ENCODE measurements at regions of chr10 and their contacts with region 1.

Region 1: GRCh38 chr10:24349379-24350001 is 140.6 kb downstream of the KIAA1217 start:
- DNase-seq: no peak
- H3K4me3 ChIP-seq: no peak overlapping the region
- H3K27ac ChIP-seq: no peak overlapping the region
- H3K4me1 ChIP-seq: peaks cover 17 to 33% of the 10 kb centered on the region in 2 donors
- H3K27me3 ChIP-seq: no peaks in the 10 kb centered on the region
- CTCF ChIP-seq: no peak
- POLR2A ChIP-seq: no peak

Region 2: GRCh38 chr10:24209946-24210491 is 139.5 kb before region 1 on chr10:
- intact Hi-C with region 1: loop called in 1 of 2 experiments (anchors 10 kb)
- DNase-seq: peak in 6 of 7 donors; percentile 18 to 53 (median 26)
- H3K4me3 ChIP-seq: peak overlapping the region in 2 of 4 donors; percentile 54 to 55
- H3K27ac ChIP-seq: peak overlapping the region in 4 of 5 donors; percentile 92 to 96 (median 94)
- H3K4me1 ChIP-seq: peaks cover 16 to 35% of the 10 kb centered on the region in 2 donors
- H3K27me3 ChIP-seq: no peaks in the 10 kb centered on the region
- CTCF ChIP-seq: no peak
- POLR2A ChIP-seq: no peak

Region 3: DNA sequence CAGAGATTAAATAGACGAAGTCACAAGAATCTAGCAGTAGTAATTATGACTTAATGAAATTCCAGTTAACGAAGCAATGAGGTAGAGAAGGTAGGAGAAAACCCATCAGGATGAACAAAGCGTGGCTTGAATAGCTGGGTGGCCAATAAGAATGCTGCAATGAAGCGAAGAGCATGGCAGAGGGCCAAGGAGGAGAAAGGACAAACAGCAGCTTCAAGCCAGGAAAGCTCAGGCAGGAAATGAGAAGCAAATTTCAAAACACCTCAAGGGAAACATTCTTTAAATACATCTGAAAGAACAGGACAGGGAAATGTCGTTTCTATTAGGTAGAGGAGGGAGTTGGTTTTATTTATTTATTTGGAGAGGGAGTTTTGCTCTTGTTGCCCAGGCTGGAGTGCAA is 18.0 kb before region 1 on chr10:
- intact Hi-C with region 1: no loop called
- DNase-seq: peak; percentile 39 to 83 (median 67)
- H3K4me3 ChIP-seq: no peak overlapping the region
- H3K27ac ChIP-seq: peak overlapping the region in 3 of 5 donors; percentile 18 to 79 (median 20)
- H3K4me1 ChIP-seq: peaks cover 9% of the 10 kb centered on the region in 2 donors
- H3K27me3 ChIP-seq: no peaks in the 10 kb centered on the region
- CTCF ChIP-seq: no peak
- POLR2A ChIP-seq: no peak

Region 4: GRCh38 chr10:24483489-24484100 is 134.1 kb after region 1 on chr10:
- intact Hi-C with region 1: no loop called
- DNase-seq: peak in 6 of 7 donors; percentile 57 to 75 (median 64)
- H3K4me3 ChIP-seq: no peak overlapping the region
- H3K27ac ChIP-seq: peak overlapping the region in 3 of 5 donors; percentile 17 to 54 (median 46)
- H3K4me1 ChIP-seq: peaks cover 0 to 7% of the 10 kb centered on the region in 2 donors
- H3K27me3 ChIP-seq: no peaks in the 10 kb centered on the region
- CTCF ChIP-seq: no peak
- POLR2A ChIP-seq: no peak